Naive thymus-derived CD8-positive, alpha-beta T cell (primary cell): ENCODE measurements at regions of chr17 and their contacts with region 1.

Region 1: DNA sequence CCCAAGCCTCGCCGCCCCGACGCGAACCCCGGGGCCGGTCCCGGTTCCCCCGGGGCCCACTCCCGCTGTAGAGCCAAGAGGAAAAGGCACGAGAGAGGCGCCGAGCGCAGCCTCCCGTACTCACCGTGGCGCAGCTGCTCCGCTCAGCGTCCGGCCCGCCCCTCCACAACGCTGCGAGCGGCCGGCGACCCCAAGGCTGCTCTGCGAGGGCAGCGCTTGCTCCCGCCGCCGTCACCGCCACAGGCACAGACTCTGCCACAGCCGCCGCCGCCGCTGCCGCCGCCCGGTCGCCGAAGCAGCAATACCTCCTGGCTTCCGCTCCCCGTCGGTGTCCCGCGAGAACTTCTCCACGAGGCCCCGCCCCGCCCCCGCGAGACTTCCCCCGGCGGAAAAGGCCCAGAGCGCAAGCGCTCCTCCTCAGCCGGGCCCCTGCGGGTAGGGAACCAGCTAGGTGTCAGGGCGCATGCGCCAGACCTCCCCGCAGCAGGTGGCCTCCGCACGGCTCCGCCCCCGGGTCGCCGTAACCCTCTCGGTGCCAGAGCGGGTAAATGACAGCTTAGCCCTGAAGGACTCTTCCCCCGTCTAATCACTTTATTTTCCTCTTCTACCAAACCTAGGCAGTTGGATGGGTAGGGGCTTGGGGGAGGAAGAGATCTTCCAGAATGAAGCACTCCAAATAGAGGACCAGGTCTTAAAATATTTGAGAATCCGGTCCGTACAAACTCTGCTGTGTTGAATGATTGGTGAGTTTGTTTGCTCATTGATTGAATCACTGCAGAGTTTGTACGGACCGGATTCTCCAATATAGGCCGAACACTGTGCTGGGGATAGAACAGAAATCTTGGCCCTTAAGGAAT is at the start of gene GRB2:
- DNase-seq: peak; percentile 98 to 100 (median 100)
- ATAC-seq: peak; percentile 78 to 80
- H3K4me3 Mint-ChIP-seq: peak within 1 kb of the TSS; percentile 93 to 100 (median 96)
- H3K27ac Mint-ChIP-seq: peak within 1 kb of the TSS; percentile 88 to 97 (median 93)
- H3K4me1 Mint-ChIP-seq: peaks cover 20 to 57% (median 47%) of the 10 kb centered on the region in 4 donors
- H3K27me3 Mint-ChIP-seq: no peaks in the 10 kb centered on the region
- polyA plus RNA-seq, gene GRB2: 130 to 162 (median 154) TPM

Region 2: DNA sequence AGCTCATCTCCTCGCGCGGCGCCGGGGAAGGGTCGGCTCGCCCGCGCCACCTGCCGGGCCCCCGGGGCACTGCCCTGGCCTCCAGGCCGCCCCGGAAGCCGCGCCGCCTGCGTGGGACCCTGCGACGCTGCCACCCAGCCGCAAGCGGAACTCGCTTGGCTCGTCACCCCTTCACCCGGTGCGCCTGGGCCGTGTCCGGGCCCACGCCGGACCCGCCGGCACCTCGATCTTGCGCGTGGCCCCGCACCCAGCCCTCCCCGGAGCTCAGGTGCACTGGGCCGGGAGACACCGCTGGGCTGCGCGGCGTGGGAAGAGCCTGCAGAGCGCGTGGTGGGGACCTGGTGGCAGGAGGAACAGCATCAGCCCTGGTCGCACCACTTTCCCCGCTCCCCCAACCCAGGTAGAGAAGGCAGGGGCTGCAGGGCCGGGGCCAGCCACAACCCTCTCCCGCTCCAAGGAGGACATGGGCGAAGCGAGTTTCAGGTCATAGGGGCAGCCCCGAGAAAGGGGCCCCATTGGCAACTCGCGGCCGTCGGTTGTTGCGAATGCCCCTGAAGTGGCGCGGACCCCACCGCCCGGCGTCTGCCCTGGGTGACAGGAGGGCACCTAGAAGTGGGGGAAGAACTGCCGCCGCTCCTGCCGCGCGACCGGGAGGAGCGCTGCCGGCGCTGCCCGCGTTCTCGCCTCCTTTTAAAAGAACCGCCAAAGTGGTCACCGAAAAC is 134.2 kb before region 1 on chr17:
- POLR2A ChIA-PET with region 1: interaction called, 17 read pairs
- DNase-seq: peak; percentile 79 to 92 (median 90)
- ATAC-seq: peak; percentile 83 to 88
- H3K4me3 Mint-ChIP-seq: peak overlapping the region; percentile 76 to 91 (median 84)
- H3K27ac Mint-ChIP-seq: peak overlapping the region; percentile 65 to 93 (median 90)
- H3K4me1 Mint-ChIP-seq: peaks cover 13 to 34% (median 28%) of the 10 kb centered on the region in 4 donors
- H3K27me3 Mint-ChIP-seq: no peaks in the 10 kb centered on the region

Region 3: GRCh38 chr17:75319904-75320691 is 85.5 kb before region 1 on chr17:
- POLR2A ChIA-PET with region 1: interaction called, 11 read pairs
- DNase-seq: no peak
- ATAC-seq: no peak
- H3K4me3 Mint-ChIP-seq: no peak overlapping the region
- H3K27ac Mint-ChIP-seq: peak overlapping the region in 2 of 10 donors; percentile 61 to 64
- H3K4me1 Mint-ChIP-seq: peaks cover 3 to 29% (median 9%) of the 10 kb centered on the region in 4 donors
- H3K27me3 Mint-ChIP-seq: no peaks in the 10 kb centered on the region

Region 4: DNA sequence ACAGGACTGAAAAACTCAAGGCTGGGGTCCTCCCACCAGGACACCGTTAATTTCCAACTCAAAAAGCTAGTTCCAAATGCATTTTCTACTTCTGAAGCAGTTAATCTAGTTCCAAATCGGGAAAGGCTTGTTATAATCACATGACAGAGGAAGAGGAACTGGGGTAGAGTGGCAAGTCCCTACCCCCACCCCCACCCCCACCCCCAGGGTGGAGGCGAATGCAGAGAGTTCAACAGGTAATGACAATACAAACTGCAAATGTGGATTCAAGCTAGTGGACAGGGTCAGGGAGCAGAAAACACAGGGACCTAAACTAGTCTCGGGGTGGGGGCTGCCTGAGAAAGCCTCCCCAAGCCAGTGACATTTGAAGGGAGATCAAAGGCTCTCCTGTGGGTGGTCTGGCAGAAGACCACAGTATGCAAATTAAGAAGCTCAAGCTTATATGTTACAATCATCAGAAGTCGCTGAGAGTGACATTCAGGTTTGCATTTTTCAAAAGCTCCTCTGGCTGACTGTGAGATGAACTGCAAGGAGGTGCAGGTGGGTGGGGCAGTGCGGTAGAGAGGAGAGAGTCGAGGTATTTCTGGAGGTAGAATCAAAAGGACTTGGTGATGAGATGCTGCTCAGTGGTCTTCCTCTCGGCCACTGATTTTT is 60.0 kb before region 1 on chr17:
- POLR2A ChIA-PET with region 1: interaction called, 21 read pairs
- DNase-seq: peak; percentile 33 to 80 (median 63)
- ATAC-seq: peak; percentile 85 to 91
- H3K4me3 Mint-ChIP-seq: peak overlapping the region; percentile 68 to 95 (median 82)
- H3K27ac Mint-ChIP-seq: peak overlapping the region; percentile 85 to 97 (median 88)
- H3K4me1 Mint-ChIP-seq: peaks cover 44 to 98% (median 93%) of the 10 kb centered on the region in 4 donors
- H3K27me3 Mint-ChIP-seq: no peaks in the 10 kb centered on the region

Region 5: DNA sequence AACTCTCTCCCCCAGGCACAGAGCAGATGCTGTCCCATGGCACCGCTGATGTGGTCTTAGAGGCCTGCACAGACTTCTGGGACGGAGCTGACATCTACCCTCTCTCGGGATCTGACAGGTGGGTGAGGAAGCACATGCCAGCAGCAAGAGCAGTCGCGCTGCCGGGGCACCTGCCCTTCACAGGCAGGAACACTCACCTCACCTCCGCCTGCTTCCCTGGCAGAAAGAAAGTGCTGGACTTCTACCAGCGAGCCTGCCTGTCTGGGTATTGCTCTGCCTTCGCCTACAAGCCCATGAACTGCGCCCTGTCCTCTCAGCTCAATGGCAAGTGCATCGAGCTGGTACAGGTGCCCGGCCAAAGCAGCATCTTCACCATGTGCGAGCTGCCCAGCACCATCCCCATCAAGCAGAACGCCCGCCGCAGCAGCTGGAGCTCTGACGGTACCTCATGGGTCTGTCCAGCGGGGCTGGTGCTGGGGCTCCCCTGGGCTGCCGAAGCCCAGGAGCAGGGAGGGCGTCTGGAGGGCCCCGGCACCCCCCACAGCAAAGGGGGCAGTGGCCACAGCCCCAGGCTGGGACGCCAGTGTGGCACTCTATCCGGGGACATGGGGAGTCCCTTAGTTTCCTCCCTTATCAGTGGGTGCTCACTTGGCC is 88.0 kb after region 1 on chr17:
- POLR2A ChIA-PET with region 1: no interaction called
- DNase-seq: no peak
- ATAC-seq: no peak
- H3K4me3 Mint-ChIP-seq: no peak overlapping the region
- H3K27ac Mint-ChIP-seq: no peak overlapping the region
- H3K4me1 Mint-ChIP-seq: peaks cover 3 to 15% (median 9%) of the 10 kb centered on the region in 4 donors
- H3K27me3 Mint-ChIP-seq: no peaks in the 10 kb centered on the region